ENCODE measurements at regions of chr15 and their contacts with region 1.

Region 1: DNA sequence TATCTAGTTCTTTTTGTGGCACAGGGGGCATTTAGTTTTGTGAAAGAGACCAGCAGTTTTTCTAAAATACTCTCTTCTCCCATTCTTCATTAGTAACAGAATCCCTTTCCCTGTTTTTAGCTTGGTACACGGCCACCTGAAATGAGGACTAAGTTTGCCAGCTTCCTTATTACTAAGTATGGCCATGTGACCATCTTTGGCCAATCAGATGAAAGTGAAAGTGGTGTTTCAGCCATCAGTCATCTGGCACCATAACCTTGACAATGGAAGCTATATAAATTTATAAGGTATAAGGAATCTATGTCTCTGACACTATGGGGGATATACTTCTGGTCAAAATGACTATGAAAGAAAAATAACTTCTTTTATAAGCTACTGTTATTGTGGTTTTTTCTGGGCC is 570.4 kb downstream of the AGBL1 start:
- DNase-seq: no peak
- H3K4me3 ChIP-seq: no peak overlapping the region
- H3K27ac ChIP-seq: no peak overlapping the region
- H3K4me1 ChIP-seq: no peaks in the 10 kb centered on the region
- H3K27me3 ChIP-seq: no peaks in the 10 kb centered on the region
- CTCF ChIP-seq: no peak

Region 2: GRCh38 chr15:86725628-86726027 is 75.5 kb after region 1 on chr15:
- intact Hi-C with region 1: loop called (anchors 10 kb)
- DNase-seq: no peak
- H3K4me3 ChIP-seq: no peak overlapping the region
- H3K27ac ChIP-seq: no peak overlapping the region
- H3K4me1 ChIP-seq: no peaks in the 10 kb centered on the region
- H3K27me3 ChIP-seq: no peaks in the 10 kb centered on the region
- CTCF ChIP-seq: no peak

Measured in ascending aorta (tissue), 2 donors.